GM13976 (cell line): ENCODE measurements at regions of chr18 and their contacts with region 1.

Region 1: DNA sequence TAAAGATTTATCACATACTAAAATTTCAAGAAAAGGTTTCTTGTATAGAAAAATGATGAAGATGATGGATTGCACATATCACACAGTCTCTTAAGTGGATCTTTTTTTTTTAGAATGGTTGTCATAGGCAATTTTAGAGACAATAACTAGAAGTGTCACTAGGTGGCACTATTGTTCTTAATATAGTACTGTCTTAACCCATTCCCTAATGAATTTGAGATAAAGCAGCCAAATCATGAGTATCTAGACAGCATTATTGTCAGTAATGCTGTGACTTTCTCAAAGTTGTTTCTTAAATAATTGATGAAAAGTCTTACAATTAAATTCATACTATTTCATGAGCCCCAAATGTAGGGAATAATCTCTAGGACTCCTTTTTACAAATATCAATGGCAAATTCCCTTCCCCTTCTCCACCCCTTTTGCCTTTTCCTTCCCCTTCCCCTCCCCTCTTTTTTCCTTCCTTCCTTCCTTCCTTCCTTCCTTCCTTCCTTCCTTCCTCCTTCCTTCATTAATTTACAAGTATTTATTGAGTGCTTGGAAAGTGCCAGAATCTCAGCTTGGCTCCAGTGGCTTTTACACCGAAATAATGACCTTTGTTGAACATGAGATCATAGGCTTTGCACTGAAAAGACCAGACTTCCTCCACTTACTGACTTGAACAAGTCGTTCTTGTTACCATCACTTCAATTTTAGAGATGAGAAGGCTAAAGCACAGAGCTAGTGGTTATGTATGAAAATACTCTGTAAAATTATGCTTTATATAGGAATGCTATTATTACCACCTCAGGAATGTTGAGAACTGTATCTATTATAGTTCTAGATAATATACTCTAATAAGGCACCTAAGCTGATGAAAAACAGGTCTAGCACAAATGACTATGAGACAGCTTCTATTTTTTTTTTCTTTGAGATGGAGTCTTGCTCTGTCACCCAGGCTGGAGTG is 19.8 kb downstream of the MYL12B start:
- DNase-seq: peak; percentile 62
- CTCF ChIP-seq: peak; percentile 48

Region 2: DNA sequence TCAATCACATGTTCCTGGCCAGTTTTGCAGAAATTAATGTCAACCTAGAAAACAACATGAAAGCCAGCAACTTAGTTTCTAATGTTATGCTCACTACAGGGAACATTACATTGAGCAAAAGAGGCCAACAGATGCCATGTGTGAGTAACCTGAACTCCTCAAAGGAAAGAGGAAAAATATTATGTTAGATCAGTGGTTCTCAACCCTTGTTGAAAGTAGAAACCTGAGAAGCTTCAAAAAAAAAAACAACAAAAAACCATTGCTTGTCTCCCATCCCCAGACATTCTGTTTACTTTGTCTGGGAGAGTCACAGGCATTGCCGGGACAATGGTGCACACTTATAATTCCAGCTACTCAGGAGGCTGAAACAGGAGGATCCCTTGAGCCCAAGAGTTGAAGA is 768.1 kb before region 1 on chr18:
- in situ Hi-C with region 1: no loop called
- DNase-seq: no peak
- CTCF ChIP-seq: no peak

Region 3: GRCh38 chr18:3593904-3594661 is 312.4 kb after region 1 on chr18:
- in situ Hi-C with region 1: loop called (anchors 10 kb)
- DNase-seq: peak; percentile 73
- CTCF ChIP-seq: peak; percentile 85

Region 4: GRCh38 chr18:3665780-3666525 is 384.2 kb after region 1 on chr18:
- in situ Hi-C with region 1: loop called (anchors 5 kb)
- DNase-seq: peak; percentile 78
- CTCF ChIP-seq: peak; percentile 87